Heart left ventricle (tissue), 16 donors: ENCODE measurements at regions of chr1 and their contacts with region 1.

Region 1: DNA sequence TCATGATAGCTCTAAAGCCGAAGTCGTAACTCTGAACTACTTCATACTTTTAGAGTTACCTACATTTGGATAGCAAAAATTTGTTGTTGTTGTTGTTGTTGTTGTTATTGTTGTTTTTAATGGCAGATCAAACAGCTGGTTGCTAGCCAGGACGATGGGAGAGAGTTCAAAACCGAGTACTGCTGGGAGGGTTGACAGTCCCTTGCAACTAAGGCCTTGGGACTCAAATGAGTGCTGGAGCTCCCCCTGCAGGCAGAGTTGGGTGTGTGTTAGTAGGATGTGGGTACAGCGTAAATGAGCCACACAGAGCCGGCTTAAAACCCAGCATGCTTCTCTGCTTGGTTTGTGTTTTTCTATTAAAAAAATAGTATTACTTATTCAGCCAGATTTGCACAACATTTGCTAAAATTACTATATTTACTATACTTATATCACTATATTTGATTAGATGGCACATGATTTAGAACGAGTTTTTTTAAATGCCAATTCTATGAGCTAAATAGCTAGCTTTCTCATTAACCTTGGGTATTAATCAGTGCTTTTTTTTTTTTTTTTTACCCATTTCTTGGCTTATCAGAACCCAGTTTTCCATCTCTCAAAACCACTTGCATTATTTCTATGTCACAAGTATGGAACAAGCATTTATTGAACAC is 129.2 kb upstream of the SYT6 start:
- DNase-seq: peak; percentile 84 to 92 (median 86)
- ATAC-seq: peak; percentile 87 to 98 (median 97)
- H3K4me3 ChIP-seq: no peak overlapping the region
- H3K27ac ChIP-seq: no peak overlapping the region
- H3K4me1 ChIP-seq: no peaks in the 10 kb centered on the region
- H3K27me3 ChIP-seq: no peaks in the 10 kb centered on the region
- CTCF ChIP-seq: peak; percentile 80 to 90 (median 85)
- POLR2A ChIP-seq: no peak

Region 2: DNA sequence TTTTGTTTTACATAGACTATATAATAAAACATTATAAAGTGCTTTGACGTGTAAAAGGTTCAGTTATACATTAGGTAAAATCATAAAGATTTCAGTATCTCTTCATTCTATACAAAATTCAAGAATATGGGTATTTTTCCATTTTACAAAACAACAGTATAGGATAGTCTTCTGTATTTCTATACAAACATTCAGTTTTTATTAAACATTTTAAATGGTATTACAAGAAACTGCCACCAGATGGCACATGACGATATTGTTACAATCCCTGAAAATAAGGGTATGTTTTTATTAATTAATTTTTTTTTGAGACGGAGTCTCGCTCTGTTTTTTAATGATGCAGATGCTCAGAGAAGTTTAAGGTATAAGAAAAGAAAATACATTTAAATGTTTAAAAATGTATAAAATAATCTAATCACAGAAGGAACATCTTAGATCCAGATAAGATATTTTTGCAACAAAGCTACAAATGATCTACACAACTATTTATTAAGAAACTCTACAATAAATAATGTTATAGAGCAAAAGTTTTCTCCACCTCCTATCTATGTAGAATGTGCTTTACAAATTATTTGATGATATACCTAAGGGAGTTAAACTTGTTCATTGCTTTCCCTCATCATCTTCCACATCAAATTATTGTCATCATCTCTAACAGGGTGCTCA is 447.1 kb before region 1 on chr1:
- intact Hi-C with region 1: loop called in 9 of 10 experiments (anchors 5 to 10 kb)
- DNase-seq: no peak
- ATAC-seq: no peak
- H3K4me3 ChIP-seq: no peak overlapping the region
- H3K27ac ChIP-seq: no peak overlapping the region
- H3K4me1 ChIP-seq: peaks cover 0 to 5% (median 0%) of the 10 kb centered on the region in 12 donors
- H3K27me3 ChIP-seq: no peaks in the 10 kb centered on the region
- CTCF ChIP-seq: peak; percentile 49 to 78 (median 68)
- POLR2A ChIP-seq: no peak

Region 3: GRCh38 chr1:113978863-113979702 is 303.8 kb before region 1 on chr1 and contains the start of gene OLFML3:
- intact Hi-C with region 1: loop called (anchors 1 to 2 kb)
- DNase-seq: peak; percentile 83 to 92 (median 86)
- ATAC-seq: peak; percentile 61 to 81 (median 74)
- H3K4me3 ChIP-seq: peak within 1 kb of the TSS in 10 of 12 donors; percentile 16 to 56 (median 40)
- H3K27ac ChIP-seq: peak within 1 kb of the TSS in 11 of 12 donors; percentile 24 to 86 (median 67)
- H3K4me1 ChIP-seq: peaks cover 0 to 83% (median 28%) of the 10 kb centered on the region in 12 donors
- H3K27me3 ChIP-seq: no peaks in the 10 kb centered on the region
- CTCF ChIP-seq: peak; percentile 48 to 85 (median 73)
- POLR2A ChIP-seq: no peak
- total RNA-seq, gene OLFML3: 5.3 to 27.2 (median 13.5) TPM

Region 4: DNA sequence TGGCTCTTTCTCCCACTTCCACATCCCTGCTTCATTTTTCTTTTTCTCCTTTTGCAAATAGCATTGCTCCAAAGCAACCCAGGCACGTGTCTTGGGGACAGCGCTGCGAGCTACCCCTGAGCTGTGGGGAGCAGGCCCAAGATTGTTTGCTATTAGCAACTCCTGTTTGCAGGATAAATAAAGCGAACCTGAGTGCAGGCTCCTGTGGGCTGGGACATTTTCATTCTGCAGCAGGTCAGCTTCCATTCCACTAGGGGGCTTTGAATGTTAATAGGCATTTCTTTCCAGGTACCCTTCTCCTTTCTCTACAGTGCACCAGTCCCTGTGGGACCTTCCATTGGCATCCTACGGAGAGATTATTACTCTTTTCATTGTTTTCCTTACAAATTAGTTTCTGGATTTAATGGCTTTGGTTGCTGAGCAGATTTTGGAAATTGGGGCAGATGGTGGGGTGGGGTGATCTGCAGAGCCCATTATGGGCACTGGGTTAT is 249.6 kb before region 1 on chr1:
- intact Hi-C with region 1: loop called in 2 of 10 experiments (anchors 5 to 10 kb)
- DNase-seq: no peak
- ATAC-seq: peak in 1 of 4 donors; percentile 13
- H3K4me3 ChIP-seq: no peak overlapping the region
- H3K27ac ChIP-seq: no peak overlapping the region
- H3K4me1 ChIP-seq: no peaks in the 10 kb centered on the region
- H3K27me3 ChIP-seq: no peaks in the 10 kb centered on the region
- CTCF ChIP-seq: peak in 10 of 12 donors; percentile 28 to 49 (median 36)
- POLR2A ChIP-seq: no peak

Region 5: GRCh38 chr1:114108751-114109255 is 174.1 kb before region 1 on chr1:
- intact Hi-C with region 1: loop called in 2 of 10 experiments (anchors 10 kb)
- DNase-seq: peak in 2 of 5 donors; percentile 41 to 43
- ATAC-seq: peak in 3 of 4 donors; percentile 19 to 55 (median 49)
- H3K4me3 ChIP-seq: no peak overlapping the region
- H3K27ac ChIP-seq: peak overlapping the region in 2 of 12 donors; percentile 13 to 73
- H3K4me1 ChIP-seq: peaks cover 0 to 32% (median 0%) of the 10 kb centered on the region in 12 donors
- H3K27me3 ChIP-seq: no peaks in the 10 kb centered on the region
- CTCF ChIP-seq: no peak
- POLR2A ChIP-seq: no peak

Region 6: DNA sequence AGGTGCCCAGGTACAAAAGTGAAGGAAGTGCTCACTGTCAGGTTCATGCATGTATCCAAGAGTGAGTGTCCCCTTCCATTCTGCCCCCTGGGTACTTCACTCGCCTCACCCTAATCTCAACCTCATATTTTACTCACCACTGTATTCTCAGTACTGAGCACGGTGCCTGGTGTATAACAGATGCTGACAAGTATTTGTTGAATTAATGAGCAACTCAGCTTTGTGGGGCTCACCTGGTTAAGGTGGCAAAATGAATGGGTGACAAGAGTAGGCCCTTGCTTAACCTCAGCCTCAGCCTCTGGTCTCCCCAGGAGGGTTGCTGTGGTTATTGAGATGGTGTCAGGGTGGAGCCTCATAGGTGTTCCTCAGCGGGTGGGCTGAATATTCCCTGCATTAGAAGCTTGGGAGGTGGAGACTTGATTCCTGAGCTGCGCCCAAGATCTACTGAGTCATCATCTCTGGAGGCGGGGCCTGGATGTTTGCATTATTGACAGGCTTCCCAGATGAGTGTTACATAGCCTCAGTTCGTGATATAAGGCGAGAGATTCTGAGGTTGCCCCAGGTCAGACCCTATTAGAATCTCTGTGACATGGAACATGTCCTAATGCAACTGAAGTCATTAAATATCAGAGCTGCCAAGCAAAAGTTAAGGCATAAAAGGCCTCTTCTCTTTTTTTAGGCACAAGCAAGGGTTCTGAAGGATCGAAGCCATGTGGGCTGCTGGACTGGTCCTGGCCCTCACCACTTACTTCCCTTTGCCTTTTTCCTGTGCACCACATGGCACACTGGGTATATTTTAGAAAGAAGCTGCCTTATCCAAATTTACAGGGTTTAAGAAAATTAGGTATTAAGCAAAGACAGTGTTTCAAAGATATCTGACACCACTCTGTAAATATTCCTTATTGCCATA is 168.4 kb before region 1 on chr1:
- intact Hi-C with region 1: loop called in 2 of 10 experiments (anchors 10 kb)
- DNase-seq: no peak
- ATAC-seq: peak in 1 of 4 donors; percentile 12
- H3K4me3 ChIP-seq: no peak overlapping the region
- H3K27ac ChIP-seq: peak overlapping the region in 2 of 12 donors; percentile 24 to 84
- H3K4me1 ChIP-seq: peaks cover 0 to 28% (median 0%) of the 10 kb centered on the region in 12 donors
- H3K27me3 ChIP-seq: peaks cover 0 to 8% (median 0%) of the 10 kb centered on the region in 9 donors
- CTCF ChIP-seq: no peak
- POLR2A ChIP-seq: no peak

Region 7: DNA sequence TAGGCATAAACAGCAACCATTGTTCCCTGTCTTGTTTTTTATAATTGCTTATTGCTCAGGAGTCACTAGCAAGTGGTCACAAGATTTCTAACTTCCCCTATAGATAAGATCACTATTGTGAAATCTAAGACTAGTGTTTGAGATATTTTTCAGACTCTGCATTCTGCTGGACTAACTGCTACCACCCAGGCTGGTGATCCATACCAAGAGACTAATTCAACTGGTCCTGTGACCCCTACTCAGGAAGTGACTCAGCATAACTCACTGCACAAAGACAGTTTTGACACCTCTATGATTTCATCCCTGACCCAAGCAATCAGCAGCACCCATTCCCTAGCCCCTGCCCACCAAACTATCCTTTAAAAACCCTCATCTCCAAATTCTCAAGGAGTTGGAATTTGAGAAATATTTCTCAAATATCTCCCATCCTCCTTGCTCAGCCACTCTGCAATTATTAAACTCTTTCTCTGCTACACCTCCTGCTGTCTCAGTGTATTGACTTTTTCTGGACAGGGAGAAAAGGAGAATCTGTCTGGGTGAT is 175.4 kb after region 1 on chr1:
- intact Hi-C with region 1: no loop called
- DNase-seq: no peak
- ATAC-seq: peak in 3 of 4 donors; percentile 26 to 53 (median 27)
- H3K4me3 ChIP-seq: no peak overlapping the region
- H3K27ac ChIP-seq: peak overlapping the region in 3 of 12 donors; percentile 11 to 45 (median 29)
- H3K4me1 ChIP-seq: peaks cover 0 to 26% (median 5%) of the 10 kb centered on the region in 12 donors
- H3K27me3 ChIP-seq: no peaks in the 10 kb centered on the region
- CTCF ChIP-seq: no peak
- POLR2A ChIP-seq: no peak

Region 8: GRCh38 chr1:114540202-114540601 is 257.3 kb after region 1 on chr1:
- intact Hi-C with region 1: no loop called
- DNase-seq: no peak
- ATAC-seq: no peak
- H3K4me3 ChIP-seq: no peak overlapping the region
- H3K27ac ChIP-seq: no peak overlapping the region
- H3K4me1 ChIP-seq: no peaks in the 10 kb centered on the region
- H3K27me3 ChIP-seq: no peaks in the 10 kb centered on the region
- CTCF ChIP-seq: no peak
- POLR2A ChIP-seq: no peak